IMR-90 (cell line): ENCODE measurements at regions of chr7 and their contacts with region 1.

Region 1: GRCh38 chr7:43721193-43721806 is 8.0 kb downstream of the COA1 start:
- DNase-seq: peak; percentile 71
- ATAC-seq: peak; percentile 46
- H3K4me3 ChIP-seq: no peak overlapping the region
- H3K27ac ChIP-seq: no peak overlapping the region
- H3K4me1 ChIP-seq: peaks cover 3% of the 10 kb centered on the region
- H3K27me3 ChIP-seq: no peaks in the 10 kb centered on the region
- CTCF ChIP-seq: peak; percentile 75
- POLR2A ChIP-seq: no peak
- RAD21 ChIP-seq: peak; percentile 73

Region 2: GRCh38 chr7:43175570-43176200 is 545.6 kb before region 1 on chr7:
- CTCF ChIA-PET with region 1: no interaction called
- POLR2A ChIA-PET with region 1: no interaction called
- dilution Hi-C with region 1: no loop called
- in situ Hi-C with region 1: no loop called
- intact Hi-C with region 1: loop called (anchors 5 kb)
- DNase-seq: no peak
- ATAC-seq: no peak
- H3K4me3 ChIP-seq: no peak overlapping the region
- H3K27ac ChIP-seq: no peak overlapping the region
- H3K4me1 ChIP-seq: no peaks in the 10 kb centered on the region
- H3K27me3 ChIP-seq: peaks cover 9% of the 10 kb centered on the region
- CTCF ChIP-seq: no peak
- POLR2A ChIP-seq: no peak
- RAD21 ChIP-seq: no peak

Region 3: GRCh38 chr7:43454936-43455518 is 266.3 kb before region 1 on chr7:
- CTCF ChIA-PET with region 1: interaction called, 5 read pairs
- POLR2A ChIA-PET with region 1: no interaction called
- dilution Hi-C with region 1: no loop called
- in situ Hi-C with region 1: no loop called
- intact Hi-C with region 1: loop called (anchors 5 kb)
- DNase-seq: peak; percentile 42
- ATAC-seq: peak; percentile 63
- H3K4me3 ChIP-seq: no peak overlapping the region
- H3K27ac ChIP-seq: no peak overlapping the region
- H3K4me1 ChIP-seq: no peaks in the 10 kb centered on the region
- H3K27me3 ChIP-seq: peaks cover 5% of the 10 kb centered on the region
- CTCF ChIP-seq: peak; percentile 54
- POLR2A ChIP-seq: no peak
- RAD21 ChIP-seq: peak; percentile 48

Region 4: GRCh38 chr7:43625453-43625852 is 95.8 kb before region 1 on chr7:
- CTCF ChIA-PET with region 1: no interaction called
- POLR2A ChIA-PET with region 1: no interaction called
- dilution Hi-C with region 1: no loop called
- in situ Hi-C with region 1: no loop called
- intact Hi-C with region 1: no loop called
- DNase-seq: no peak
- ATAC-seq: peak; percentile 18; the same call in 1 of the 2 replicates
- H3K4me3 ChIP-seq: no peak overlapping the region
- H3K27ac ChIP-seq: no peak overlapping the region; the same call in 1 of the 2 replicates
- H3K4me1 ChIP-seq: peaks cover 7% of the 10 kb centered on the region
- H3K27me3 ChIP-seq: no peaks in the 10 kb centered on the region
- CTCF ChIP-seq: no peak
- POLR2A ChIP-seq: no peak
- RAD21 ChIP-seq: no peak